Cardiac septum (tissue), 1 donor: ENCODE measurements at regions of chr5 and their contacts with region 1.

Region 1: GRCh38 chr5:171907725-171908343 is 98.6 kb downstream of the FBXW11 start:
- DNase-seq: no peak

Region 2: GRCh38 chr5:171484460-171484899 is 423.4 kb before region 1 on chr5:
- intact Hi-C with region 1: loop called (anchors 10 kb)
- DNase-seq: no peak

Region 3: GRCh38 chr5:171845857-171846256 is 62.0 kb before region 1 on chr5:
- intact Hi-C with region 1: loop called (anchors 5 kb)
- DNase-seq: no peak

Region 4: GRCh38 chr5:171939951-171940350 is 32.1 kb after region 1 on chr5:
- intact Hi-C with region 1: no loop called
- DNase-seq: no peak